CD8-positive, alpha-beta T cell (primary cell): ENCODE measurements at regions of chr1 and their contacts with region 1.

Region 1: GRCh38 chr1:171817511-171818265 is 23.6 kb upstream of the DNM3 start:
- DNase-seq: peak in 2 of 9 experiments; percentile 10 to 35
- ATAC-seq: no peak
- H3K4me3 ChIP-seq: no peak overlapping the region
- H3K4me3 Mint-ChIP-seq: no peak overlapping the region
- H3K27ac ChIP-seq: no peak overlapping the region
- H3K27ac Mint-ChIP-seq: no peak overlapping the region
- H3K4me1 ChIP-seq: no peaks in the 10 kb centered on the region
- H3K4me1 Mint-ChIP-seq: no peaks in the 10 kb centered on the region
- H3K27me3 ChIP-seq: no peaks in the 10 kb centered on the region
- H3K27me3 Mint-ChIP-seq: no peaks in the 10 kb centered on the region
- CTCF ChIP-seq: no peak

Region 2: GRCh38 chr1:171781176-171781875 is 36.4 kb before region 1 on chr1 and contains the start of gene METTL13:
- CTCF ChIA-PET with region 1: no interaction called
- POLR2A ChIA-PET with region 1: no interaction called
- intact Hi-C with region 1: no loop called
- DNase-seq: peak; percentile 96 to 99 (median 98)
- ATAC-seq: peak; percentile 90
- H3K4me3 ChIP-seq: peak within 1 kb of the TSS; percentile 89 to 92
- H3K4me3 Mint-ChIP-seq: peak within 1 kb of the TSS; percentile 95
- H3K27ac ChIP-seq: peak within 1 kb of the TSS; percentile 75 to 89
- H3K27ac Mint-ChIP-seq: peak within 1 kb of the TSS; percentile 96
- H3K4me1 ChIP-seq: peaks cover 33% of the 10 kb centered on the region
- H3K4me1 Mint-ChIP-seq: peaks cover 54% of the 10 kb centered on the region
- H3K27me3 ChIP-seq: no peaks in the 10 kb centered on the region
- H3K27me3 Mint-ChIP-seq: no peaks in the 10 kb centered on the region
- CTCF ChIP-seq: no peak
- total RNA-seq, gene METTL13: 6.6 to 6.9 TPM

Region 3: GRCh38 chr1:171801487-171801891 is 16.2 kb before region 1 on chr1:
- CTCF ChIA-PET with region 1: interaction called, 17 read pairs
- POLR2A ChIA-PET with region 1: no interaction called
- intact Hi-C with region 1: no loop called
- DNase-seq: peak in 2 of 9 experiments; percentile 43 to 52
- ATAC-seq: no peak
- H3K4me3 ChIP-seq: no peak overlapping the region
- H3K4me3 Mint-ChIP-seq: no peak overlapping the region
- H3K27ac ChIP-seq: no peak overlapping the region
- H3K27ac Mint-ChIP-seq: no peak overlapping the region
- H3K4me1 ChIP-seq: no peaks in the 10 kb centered on the region
- H3K4me1 Mint-ChIP-seq: peaks cover 6% of the 10 kb centered on the region
- H3K27me3 ChIP-seq: no peaks in the 10 kb centered on the region
- H3K27me3 Mint-ChIP-seq: no peaks in the 10 kb centered on the region
- CTCF ChIP-seq: peak; percentile 66